ENCODE measurements at regions of chr2 and their contacts with region 1.

Region 1: DNA sequence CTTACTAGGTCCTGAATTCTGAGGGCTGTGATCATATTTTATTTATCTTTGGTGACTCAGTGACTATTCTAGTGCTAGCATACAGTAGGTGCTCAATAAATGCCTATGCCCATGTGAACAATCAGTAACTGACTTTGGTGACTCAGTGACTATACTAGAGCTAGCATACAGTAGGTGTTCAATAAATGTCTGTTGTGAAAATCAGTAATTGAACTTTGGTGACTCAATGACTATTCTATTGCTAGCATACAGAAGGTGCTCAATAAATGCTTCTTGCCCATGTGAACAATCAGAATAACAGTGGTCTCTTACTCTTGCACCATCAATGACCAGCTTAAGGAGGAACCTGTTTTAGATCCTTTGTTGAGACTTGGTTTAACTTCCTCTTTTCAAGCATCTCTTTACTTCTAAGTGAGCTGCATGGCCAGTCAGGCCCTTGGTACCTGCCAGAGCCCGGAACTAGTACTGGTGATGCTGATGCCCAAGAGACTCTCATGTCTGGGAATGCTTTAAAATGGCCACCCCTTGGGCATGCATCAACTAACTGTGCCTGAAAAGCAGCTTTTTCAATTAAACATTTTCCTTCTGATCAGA is 214.9 kb upstream of the SPRED2 start:
- DNase-seq: no peak
- H3K4me3 Mint-ChIP-seq: no peak overlapping the region
- H3K27ac Mint-ChIP-seq: no peak overlapping the region
- H3K4me1 Mint-ChIP-seq: no peaks in the 10 kb centered on the region
- H3K27me3 Mint-ChIP-seq: peaks cover 9% of the 10 kb centered on the region

Region 2: GRCh38 chr2:65604245-65604644 is 43.1 kb before region 1 on chr2:
- intact Hi-C with region 1: no loop called
- DNase-seq: no peak
- H3K4me3 Mint-ChIP-seq: no peak overlapping the region
- H3K27ac Mint-ChIP-seq: no peak overlapping the region
- H3K4me1 Mint-ChIP-seq: peaks cover 8% of the 10 kb centered on the region
- H3K27me3 Mint-ChIP-seq: no peaks in the 10 kb centered on the region

Region 3: GRCh38 chr2:65974067-65974723 is 326.8 kb after region 1 on chr2:
- intact Hi-C with region 1: no loop called
- DNase-seq: no peak
- H3K4me3 Mint-ChIP-seq: no peak overlapping the region
- H3K27ac Mint-ChIP-seq: no peak overlapping the region
- H3K4me1 Mint-ChIP-seq: no peaks in the 10 kb centered on the region
- H3K27me3 Mint-ChIP-seq: no peaks in the 10 kb centered on the region

Region 4: GRCh38 chr2:66574701-66575624 is 927.6 kb after region 1 on chr2:
- intact Hi-C with region 1: loop called (anchors 10 kb)
- DNase-seq: no peak
- H3K4me3 Mint-ChIP-seq: peak overlapping the region; percentile 8
- H3K27ac Mint-ChIP-seq: no peak overlapping the region
- H3K4me1 Mint-ChIP-seq: peaks cover 2% of the 10 kb centered on the region
- H3K27me3 Mint-ChIP-seq: peaks cover 51% of the 10 kb centered on the region